Pancreas (tissue), 10 donors: ENCODE measurements at regions of chr21 and their contacts with region 1.

Region 1: GRCh38 chr21:45820171-45821091 is 161.1 kb upstream of the COL6A1 start:
- DNase-seq: peak; percentile 64 to 88 (median 80)
- ATAC-seq: peak; percentile 89 to 99 (median 96)
- H3K4me3 ChIP-seq: no peak overlapping the region
- H3K27ac ChIP-seq: no peak overlapping the region
- H3K4me1 ChIP-seq: no peaks in the 10 kb centered on the region
- H3K27me3 ChIP-seq: no peaks in the 10 kb centered on the region
- CTCF ChIP-seq: peak; percentile 59 to 86 (median 76)

Region 2: DNA sequence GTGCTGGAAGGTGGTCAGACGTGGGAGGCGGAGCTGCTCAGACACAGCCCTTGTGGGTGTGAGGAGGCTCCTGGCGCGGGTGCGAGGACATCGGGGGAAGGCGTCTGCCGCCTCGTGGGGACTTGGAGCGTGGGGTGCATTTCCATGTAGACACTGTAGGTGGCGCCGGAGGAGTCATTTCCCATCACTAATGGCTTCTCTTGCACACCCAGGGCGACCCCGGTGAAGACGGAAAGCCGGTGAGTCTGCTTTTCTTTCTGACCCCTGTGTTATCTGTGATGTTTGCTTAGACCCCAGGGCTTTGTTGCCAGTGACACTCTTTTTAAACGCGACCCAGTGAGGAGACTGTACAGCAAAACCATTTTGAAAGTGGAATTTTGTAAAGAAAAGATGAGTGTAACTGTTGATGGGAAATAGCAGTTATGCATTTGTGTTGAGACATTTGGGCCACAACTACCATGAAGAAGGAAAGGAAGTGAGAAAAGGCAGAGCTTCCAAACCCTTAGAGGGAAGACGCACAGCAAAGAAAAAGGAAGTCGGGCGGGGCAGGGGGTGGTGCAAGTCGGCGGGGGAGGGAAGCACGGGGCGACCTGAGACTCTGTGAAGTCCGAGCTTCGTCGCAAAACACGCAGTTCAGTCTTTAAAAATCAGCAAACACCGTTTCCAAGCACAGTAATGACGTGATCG is 342.2 kb before region 1 on chr21:
- intact Hi-C with region 1: loop called in 1 of 3 experiments (anchors 10 kb)
- DNase-seq: peak in 5 of 6 donors; percentile 20 to 78 (median 56)
- ATAC-seq: peak; percentile 55 to 85 (median 80)
- H3K4me3 ChIP-seq: peak overlapping the region in 1 of 4 donors; percentile 14
- H3K27ac ChIP-seq: peak overlapping the region in 2 of 4 donors; percentile 33 to 55
- H3K4me1 ChIP-seq: no peaks in the 10 kb centered on the region
- H3K27me3 ChIP-seq: no peaks in the 10 kb centered on the region
- CTCF ChIP-seq: peak; percentile 58 to 87 (median 73)

Region 3: DNA sequence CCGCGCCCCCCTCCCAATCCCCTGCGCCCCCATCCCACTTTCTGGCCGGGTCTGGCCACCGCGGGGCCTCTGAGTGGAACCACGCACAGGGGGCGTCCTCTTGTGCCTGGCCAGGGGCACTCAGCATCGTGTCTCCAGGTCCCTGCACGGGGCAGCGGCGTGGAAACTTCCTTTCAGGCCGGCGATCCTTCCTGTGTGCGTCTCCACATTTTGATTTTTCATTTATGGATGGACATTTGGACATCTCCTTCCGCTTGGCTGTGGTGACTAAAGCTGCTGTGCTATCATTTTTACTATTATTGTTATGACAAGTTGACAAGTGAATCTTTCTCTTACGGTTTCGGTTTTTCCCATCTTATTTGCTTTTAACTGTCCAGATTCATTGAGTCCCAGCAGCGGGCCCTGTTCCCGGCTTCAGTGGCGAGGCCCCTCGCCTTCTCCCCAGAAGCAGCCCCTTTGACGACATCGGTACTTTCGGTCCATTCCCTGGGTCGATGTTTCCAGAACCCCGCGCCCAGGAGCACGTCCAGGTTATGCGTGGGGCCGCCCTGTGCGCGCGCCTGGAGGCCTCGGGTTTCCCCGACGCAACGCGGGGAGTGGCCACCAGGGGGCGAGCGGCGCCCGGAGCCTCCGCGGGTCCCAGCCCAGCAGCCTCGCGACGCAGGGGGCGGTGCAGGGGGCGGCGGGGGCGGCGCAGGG is 265.8 kb before region 1 on chr21:
- intact Hi-C with region 1: loop called in 2 of 3 experiments (anchors 5 to 10 kb)
- DNase-seq: peak; percentile 78 to 99 (median 87)
- ATAC-seq: peak; percentile 71 to 82 (median 76)
- H3K4me3 ChIP-seq: peak overlapping the region; percentile 2 to 50 (median 42)
- H3K27ac ChIP-seq: peak overlapping the region in 3 of 4 donors; percentile 28 to 81 (median 45)
- H3K4me1 ChIP-seq: no peaks in the 10 kb centered on the region
- H3K27me3 ChIP-seq: no peaks in the 10 kb centered on the region
- CTCF ChIP-seq: peak; percentile 71 to 80 (median 78)